Activated naive CD4-positive, alpha-beta T cell treated with anti-CD3 and anti-CD28 coated beads for 36 hours (primary cell): ENCODE measurements at regions of chr1 and their contacts with region 1.

Region 1: GRCh38 chr1:111603979-111604378 is 15.6 kb upstream of the RAP1A start:
- DNase-seq: peak; percentile 90
- H3K4me3 Mint-ChIP-seq: peak overlapping the region; percentile 7
- H3K27ac Mint-ChIP-seq: peak overlapping the region; percentile 92
- H3K4me1 Mint-ChIP-seq: peaks cover 76% of the 10 kb centered on the region
- H3K27me3 Mint-ChIP-seq: no peaks in the 10 kb centered on the region

Region 2: GRCh38 chr1:111471012-111471411 is 133.0 kb before region 1 on chr1:
- CTCF ChIA-PET with region 1: no interaction called
- intact Hi-C with region 1: loop called (anchors 2 kb)
- DNase-seq: peak; percentile 88
- H3K4me3 Mint-ChIP-seq: no peak overlapping the region
- H3K27ac Mint-ChIP-seq: no peak overlapping the region
- H3K4me1 Mint-ChIP-seq: peaks cover 24% of the 10 kb centered on the region
- H3K27me3 Mint-ChIP-seq: no peaks in the 10 kb centered on the region

Region 3: DNA sequence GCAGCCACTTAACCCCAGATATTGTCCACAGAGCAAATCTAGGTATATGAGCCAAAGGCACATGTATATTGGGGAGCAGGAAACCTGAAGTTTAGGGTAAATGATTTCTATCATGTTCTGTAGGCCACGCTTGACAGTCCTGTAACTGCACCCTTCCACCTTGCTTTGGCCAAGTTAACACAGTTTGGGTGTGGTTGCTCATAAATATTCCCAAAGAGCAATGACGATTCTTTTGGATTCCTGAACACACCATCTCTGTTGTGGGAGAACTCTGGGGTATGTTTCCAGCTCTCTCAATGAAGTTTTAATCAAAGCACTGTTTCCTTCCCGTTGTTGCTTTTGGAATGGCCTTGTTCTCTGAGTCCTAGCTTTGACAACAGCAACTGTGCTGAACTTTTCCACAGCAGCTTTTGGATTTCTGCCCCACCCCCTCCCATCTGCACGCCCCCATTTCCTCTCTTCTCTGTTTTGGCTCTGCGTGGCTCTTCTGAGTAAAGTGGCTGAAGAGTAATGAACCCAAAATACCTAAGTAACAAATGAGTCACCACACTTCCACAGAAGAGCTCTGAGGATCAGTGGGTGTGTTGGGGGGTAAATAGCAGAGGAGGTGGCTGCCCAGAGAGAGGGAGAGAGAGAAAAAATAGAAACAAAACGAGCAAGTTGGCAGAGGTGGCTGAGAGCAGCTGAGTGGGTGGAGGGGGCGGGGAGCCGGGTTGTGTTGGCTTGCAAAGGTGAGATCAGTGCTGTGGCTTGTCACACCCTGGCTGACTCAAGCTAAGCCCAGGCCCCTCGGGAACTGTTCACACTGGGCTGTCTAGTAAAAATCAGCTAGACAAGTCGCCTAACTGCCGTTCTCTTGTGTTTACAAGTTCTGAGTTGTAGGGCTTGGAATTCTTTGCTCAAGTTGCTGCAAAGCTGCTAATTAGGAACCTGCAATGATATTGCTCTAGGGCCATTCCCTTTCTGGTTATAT is 11.3 kb before region 1 on chr1:
- CTCF ChIA-PET with region 1: interaction called, 5 read pairs
- intact Hi-C with region 1: loop called (anchors 1 kb)
- DNase-seq: peak; percentile 96
- H3K4me3 Mint-ChIP-seq: peak overlapping the region; percentile 54
- H3K27ac Mint-ChIP-seq: peak overlapping the region; percentile 86
- H3K4me1 Mint-ChIP-seq: peaks cover 56% of the 10 kb centered on the region
- H3K27me3 Mint-ChIP-seq: no peaks in the 10 kb centered on the region

Region 4: DNA sequence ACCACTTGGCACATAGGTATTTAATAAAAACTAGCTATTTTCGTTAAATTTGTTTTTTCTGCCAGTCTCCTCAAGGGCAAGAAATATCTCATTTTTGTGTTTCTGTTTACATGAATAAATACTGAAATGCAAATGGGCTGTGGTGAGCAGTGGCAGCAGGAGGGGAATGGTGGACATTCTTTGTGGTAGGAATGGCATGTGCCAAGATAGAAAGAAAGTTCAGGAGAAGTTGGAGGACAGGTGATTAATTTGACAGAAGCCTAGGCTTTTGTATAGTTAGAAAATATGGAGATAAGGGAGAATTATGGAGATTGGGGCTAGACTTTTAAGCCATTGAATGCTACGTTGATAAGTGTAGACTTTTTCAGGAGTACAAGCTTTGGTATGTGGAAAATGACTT is 24.2 kb after region 1 on chr1:
- CTCF ChIA-PET with region 1: interaction called, 6 read pairs
- intact Hi-C with region 1: loop called (anchors 1 kb)
- DNase-seq: no peak
- H3K4me3 Mint-ChIP-seq: peak overlapping the region; percentile 39
- H3K27ac Mint-ChIP-seq: peak overlapping the region; percentile 69
- H3K4me1 Mint-ChIP-seq: peaks cover 88% of the 10 kb centered on the region
- H3K27me3 Mint-ChIP-seq: no peaks in the 10 kb centered on the region

Region 5: GRCh38 chr1:111747282-111747734 is 143.3 kb after region 1 on chr1:
- CTCF ChIA-PET with region 1: no interaction called
- intact Hi-C with region 1: loop called (anchors 2 kb)
- DNase-seq: peak; percentile 88
- H3K4me3 Mint-ChIP-seq: no peak overlapping the region
- H3K27ac Mint-ChIP-seq: no peak overlapping the region
- H3K4me1 Mint-ChIP-seq: no peaks in the 10 kb centered on the region
- H3K27me3 Mint-ChIP-seq: no peaks in the 10 kb centered on the region